Activated CD4-positive, alpha-beta memory T cell treated with anti-CD3 and anti-CD28 coated beads for 36 hours (primary cell): ENCODE measurements at regions of chr1 and their contacts with region 1.

Region 1: GRCh38 chr1:220089650-220090556 is at the start of gene BPNT1:
- DNase-seq: peak; percentile 98
- H3K4me3 Mint-ChIP-seq: peak within 1 kb of the TSS; percentile 88
- H3K27ac Mint-ChIP-seq: peak within 1 kb of the TSS; percentile 82
- H3K4me1 Mint-ChIP-seq: peaks cover 10% of the 10 kb centered on the region
- H3K27me3 Mint-ChIP-seq: no peaks in the 10 kb centered on the region
- total RNA-seq, gene BPNT1: 20.5 to 25.8 TPM

Region 2: GRCh38 chr1:218284934-218285635 is 1804.8 kb before region 1 on chr1 and contains the start of gene RRP15:
- CTCF ChIA-PET with region 1: no interaction called
- POLR2A ChIA-PET with region 1: no interaction called
- intact Hi-C with region 1: loop called (anchors 10 kb)
- DNase-seq: peak; percentile 92
- H3K4me3 Mint-ChIP-seq: peak within 1 kb of the TSS; percentile 97
- H3K27ac Mint-ChIP-seq: peak within 1 kb of the TSS; percentile 80
- H3K4me1 Mint-ChIP-seq: peaks cover 25% of the 10 kb centered on the region
- H3K27me3 Mint-ChIP-seq: peaks cover 11% of the 10 kb centered on the region
- total RNA-seq, gene RRP15: 18.0 to 18.8 TPM

Region 3: DNA sequence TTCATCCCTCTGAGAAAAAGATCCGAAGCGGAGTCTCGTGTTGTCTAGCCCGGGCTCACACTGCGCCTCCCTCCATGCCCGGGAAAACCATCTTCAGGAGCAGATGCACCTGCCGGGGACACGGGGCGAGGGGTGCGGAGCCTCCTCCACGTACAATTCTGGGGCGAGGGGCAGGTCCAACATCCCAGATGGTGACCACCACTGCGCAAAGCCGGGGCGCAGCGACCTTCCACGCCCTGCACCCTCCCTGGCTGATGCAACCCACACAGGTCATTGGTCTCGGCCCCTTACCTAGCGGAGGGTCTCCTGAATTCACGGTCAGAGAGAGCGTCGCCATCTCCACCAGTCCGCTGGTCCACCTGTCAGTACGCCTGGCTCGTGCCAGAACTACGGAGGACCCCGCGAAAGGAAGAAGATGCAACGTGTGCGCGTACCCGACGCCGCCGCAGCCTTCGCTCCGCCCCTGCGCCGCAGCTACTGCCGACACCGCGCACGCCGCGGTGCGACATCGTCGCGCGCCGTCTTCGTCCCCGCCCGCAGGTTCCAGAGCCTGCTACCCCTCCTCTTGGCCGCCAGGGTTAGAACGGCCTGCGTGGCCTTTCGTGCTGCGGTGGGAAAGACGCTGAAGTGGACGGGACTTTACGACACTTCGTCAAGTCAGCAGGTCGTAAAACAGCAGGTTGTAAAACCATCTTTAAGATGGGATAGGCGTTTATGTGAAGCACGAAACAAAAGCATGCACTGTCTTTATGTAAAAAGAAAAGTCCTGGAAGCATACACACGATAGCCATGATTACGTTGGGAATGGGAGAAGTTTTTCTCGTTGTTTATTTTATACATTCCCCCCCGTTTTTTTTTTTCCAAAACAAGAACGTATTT is 43.6 kb before region 1 on chr1 and contains the start of gene EPRS1:
- CTCF ChIA-PET with region 1: interaction called, 3 read pairs
- POLR2A ChIA-PET with region 1: interaction called, 5 read pairs
- intact Hi-C with region 1: loop called (anchors 1 kb)
- DNase-seq: peak; percentile 97
- H3K4me3 Mint-ChIP-seq: peak within 1 kb of the TSS; percentile 94
- H3K27ac Mint-ChIP-seq: peak within 1 kb of the TSS; percentile 96
- H3K4me1 Mint-ChIP-seq: peaks cover 29% of the 10 kb centered on the region
- H3K27me3 Mint-ChIP-seq: no peaks in the 10 kb centered on the region
- total RNA-seq, gene EPRS1: 191 to 198 TPM

Region 4: GRCh38 chr1:220528679-220529501 is 439.0 kb after region 1 on chr1:
- CTCF ChIA-PET with region 1: no interaction called
- POLR2A ChIA-PET with region 1: no interaction called
- intact Hi-C with region 1: no loop called
- DNase-seq: no peak
- H3K4me3 Mint-ChIP-seq: peak overlapping the region; percentile 55
- H3K27ac Mint-ChIP-seq: no peak overlapping the region
- H3K4me1 Mint-ChIP-seq: peaks cover 11% of the 10 kb centered on the region
- H3K27me3 Mint-ChIP-seq: peaks cover 54% of the 10 kb centered on the region